ENCODE measurements at regions of chr1 and their contacts with region 1.

Region 1: GRCh38 chr1:182839209-182840065 is at the start of gene DHX9:
- DNase-seq: peak; percentile 93 to 100 (median 97)
- ATAC-seq: peak; percentile 89
- H3K4me3 ChIP-seq: peak within 1 kb of the TSS; percentile 99
- H3K4me3 Mint-ChIP-seq: peak within 1 kb of the TSS; percentile 91 to 100 (median 98)
- H3K27ac ChIP-seq: peak within 1 kb of the TSS; percentile 84
- H3K27ac Mint-ChIP-seq: peak within 1 kb of the TSS; percentile 92 to 100 (median 98)
- H3K4me1 ChIP-seq: peaks cover 22 to 33% of the 10 kb centered on the region in 2 donors
- H3K4me1 Mint-ChIP-seq: peaks cover 36 to 61% (median 54%) of the 10 kb centered on the region in 7 donors
- H3K27me3 ChIP-seq: no peaks in the 10 kb centered on the region
- H3K27me3 Mint-ChIP-seq: peaks cover 0 to 9% (median 0%) of the 10 kb centered on the region in 5 donors
- total RNA-seq, gene DHX9: 207 to 299 (median 227) TPM

Region 2: DNA sequence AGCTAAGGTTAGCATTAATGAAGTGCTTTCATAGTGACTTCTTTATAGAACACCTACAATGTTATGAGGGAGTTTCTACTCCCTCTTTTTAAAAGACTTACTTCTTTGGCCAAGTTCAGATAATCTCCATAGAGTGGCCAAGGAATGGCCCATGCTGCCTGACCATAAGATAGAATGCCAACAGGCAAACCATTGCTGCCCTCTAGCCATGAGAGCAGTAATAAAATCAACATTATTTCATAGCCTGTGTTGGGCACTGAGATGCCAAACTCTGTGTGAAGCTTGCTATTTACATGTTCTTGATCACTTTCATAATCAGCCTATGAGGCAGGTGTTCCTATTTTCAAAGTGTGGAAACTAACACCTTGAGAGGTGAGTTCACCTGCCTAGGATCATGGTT is 910.1 kb before region 1 on chr1:
- CTCF ChIA-PET with region 1: no interaction called
- POLR2A ChIA-PET with region 1: no interaction called
- intact Hi-C with region 1: no loop called
- DNase-seq: no peak
- ATAC-seq: no peak
- H3K4me3 ChIP-seq: no peak overlapping the region
- H3K4me3 Mint-ChIP-seq: no peak overlapping the region
- H3K27ac ChIP-seq: no peak overlapping the region
- H3K27ac Mint-ChIP-seq: no peak overlapping the region
- H3K4me1 ChIP-seq: no peaks in the 10 kb centered on the region
- H3K4me1 Mint-ChIP-seq: no peaks in the 10 kb centered on the region
- H3K27me3 ChIP-seq: no peaks in the 10 kb centered on the region
- H3K27me3 Mint-ChIP-seq: peaks cover 0 to 8% (median 4%) of the 10 kb centered on the region in 5 donors

Region 3: GRCh38 chr1:182259229-182259872 is 580.1 kb before region 1 on chr1:
- CTCF ChIA-PET with region 1: no interaction called
- POLR2A ChIA-PET with region 1: no interaction called
- intact Hi-C with region 1: loop called in 1 of 2 experiments (anchors 1 kb)
- DNase-seq: peak; percentile 21 to 79 (median 65)
- ATAC-seq: peak; percentile 90
- H3K4me3 ChIP-seq: peak overlapping the region; percentile 2
- H3K4me3 Mint-ChIP-seq: peak overlapping the region; percentile 28 to 82 (median 75)
- H3K27ac ChIP-seq: peak overlapping the region; percentile 72
- H3K27ac Mint-ChIP-seq: peak overlapping the region; percentile 83 to 97 (median 91)
- H3K4me1 ChIP-seq: peaks cover 11 to 20% of the 10 kb centered on the region in 2 donors
- H3K4me1 Mint-ChIP-seq: peaks cover 23 to 50% (median 43%) of the 10 kb centered on the region in 7 donors
- H3K27me3 ChIP-seq: no peaks in the 10 kb centered on the region
- H3K27me3 Mint-ChIP-seq: no peaks in the 10 kb centered on the region

Region 4: GRCh38 chr1:182588500-182589452 is 250.7 kb before region 1 on chr1 and contains the start of gene RNASEL:
- CTCF ChIA-PET with region 1: no interaction called
- POLR2A ChIA-PET with region 1: interaction called, 7 read pairs
- intact Hi-C with region 1: loop called (anchors 1 kb)
- DNase-seq: peak; percentile 24 to 72 (median 65)
- ATAC-seq: peak; percentile 89
- H3K4me3 ChIP-seq: peak within 1 kb of the TSS; percentile 92
- H3K4me3 Mint-ChIP-seq: peak within 1 kb of the TSS; percentile 93 to 99 (median 98)
- H3K27ac ChIP-seq: peak within 1 kb of the TSS; percentile 97
- H3K27ac Mint-ChIP-seq: peak within 1 kb of the TSS; percentile 97 to 100 (median 99)
- H3K4me1 ChIP-seq: peaks cover 23 to 27% of the 10 kb centered on the region in 2 donors
- H3K4me1 Mint-ChIP-seq: peaks cover 31 to 60% (median 51%) of the 10 kb centered on the region in 7 donors
- H3K27me3 ChIP-seq: no peaks in the 10 kb centered on the region
- H3K27me3 Mint-ChIP-seq: peaks cover 0 to 9% (median 0%) of the 10 kb centered on the region in 5 donors
- total RNA-seq, gene RNASEL: 5.7 to 34.9 (median 12.1) TPM

Region 5: DNA sequence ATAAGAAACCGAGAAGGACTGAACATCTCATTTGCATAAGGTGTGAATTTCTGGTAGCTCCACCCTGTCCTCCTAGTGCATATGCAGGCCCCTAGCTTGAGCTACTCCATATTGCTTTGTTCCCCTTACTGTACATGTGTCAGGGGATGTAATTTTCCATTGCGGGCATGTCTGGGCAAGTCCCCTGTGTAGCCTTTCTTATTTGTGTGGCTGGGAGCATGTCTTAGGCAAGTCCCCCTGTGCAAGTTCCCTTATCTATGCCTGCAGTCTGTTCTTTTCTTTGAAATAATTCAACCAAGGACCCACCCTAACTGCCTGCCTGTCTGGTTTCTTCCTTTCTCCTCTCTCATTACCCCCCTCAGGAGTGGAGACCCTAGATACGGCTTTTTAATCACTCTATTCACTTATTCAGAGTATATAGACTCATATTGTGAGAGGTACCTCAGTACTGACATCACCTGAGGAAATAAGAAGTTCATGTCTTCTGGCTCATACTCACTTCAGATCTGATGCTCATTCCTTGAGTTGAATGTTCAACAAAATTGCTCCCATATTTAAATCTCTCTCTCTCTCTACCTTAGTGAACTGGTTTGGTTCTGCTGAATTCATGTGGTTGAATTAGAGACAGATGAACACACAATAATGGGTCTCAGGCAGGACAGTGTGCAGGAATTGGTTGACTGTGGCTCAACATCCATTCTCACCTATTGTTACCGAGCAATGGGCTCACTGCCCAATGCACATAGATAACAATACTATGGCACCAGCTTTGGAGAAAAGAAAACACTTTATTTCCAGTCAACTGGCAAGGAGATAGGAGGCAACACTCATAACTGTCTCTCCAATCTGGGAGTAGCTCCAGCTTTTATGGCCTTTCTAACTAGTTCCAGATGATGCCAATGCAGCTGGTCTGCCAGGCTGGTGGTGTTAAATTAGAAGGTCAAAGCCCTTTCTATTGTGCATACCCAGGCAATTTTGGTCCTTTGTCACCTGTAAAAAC is 77.7 kb before region 1 on chr1:
- CTCF ChIA-PET with region 1: no interaction called
- POLR2A ChIA-PET with region 1: no interaction called
- intact Hi-C with region 1: no loop called
- DNase-seq: no peak
- ATAC-seq: no peak
- H3K4me3 ChIP-seq: no peak overlapping the region
- H3K4me3 Mint-ChIP-seq: no peak overlapping the region
- H3K27ac ChIP-seq: no peak overlapping the region
- H3K27ac Mint-ChIP-seq: no peak overlapping the region
- H3K4me1 ChIP-seq: no peaks in the 10 kb centered on the region
- H3K4me1 Mint-ChIP-seq: peaks cover 0 to 5% (median 0%) of the 10 kb centered on the region in 7 donors
- H3K27me3 ChIP-seq: no peaks in the 10 kb centered on the region
- H3K27me3 Mint-ChIP-seq: peaks cover 6 to 19% (median 9%) of the 10 kb centered on the region in 5 donors

Region 6: GRCh38 chr1:182817802-182818201 is 21.6 kb before region 1 on chr1:
- CTCF ChIA-PET with region 1: no interaction called
- POLR2A ChIA-PET with region 1: no interaction called
- intact Hi-C with region 1: no loop called
- DNase-seq: no peak
- ATAC-seq: no peak
- H3K4me3 ChIP-seq: no peak overlapping the region
- H3K4me3 Mint-ChIP-seq: no peak overlapping the region
- H3K27ac ChIP-seq: no peak overlapping the region
- H3K27ac Mint-ChIP-seq: no peak overlapping the region
- H3K4me1 ChIP-seq: no peaks in the 10 kb centered on the region
- H3K4me1 Mint-ChIP-seq: no peaks in the 10 kb centered on the region
- H3K27me3 ChIP-seq: no peaks in the 10 kb centered on the region
- H3K27me3 Mint-ChIP-seq: no peaks in the 10 kb centered on the region

Region 7: DNA sequence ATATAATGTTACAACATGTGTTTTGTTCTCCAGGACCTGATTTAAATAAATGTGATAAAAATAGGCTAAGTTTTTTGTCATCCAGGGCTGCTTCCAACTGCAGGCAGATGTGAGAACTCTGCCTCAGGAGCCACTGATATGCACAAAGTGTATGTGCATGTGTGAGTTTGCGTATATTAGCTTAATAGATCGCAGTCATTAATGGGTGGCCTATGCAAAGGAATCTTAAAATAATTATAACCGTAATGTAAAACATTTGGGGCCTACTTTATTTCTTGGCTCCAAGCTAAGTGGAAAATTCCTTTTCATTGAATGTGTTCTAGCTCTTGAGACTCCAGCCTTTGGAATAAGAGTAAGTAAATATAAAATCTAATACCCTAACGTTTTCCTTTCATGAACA is 16.5 kb after region 1 on chr1:
- CTCF ChIA-PET with region 1: no interaction called
- POLR2A ChIA-PET with region 1: interaction called, 3 read pairs
- intact Hi-C with region 1: loop called in 1 of 2 experiments (anchors 2 kb)
- DNase-seq: no peak
- ATAC-seq: no peak
- H3K4me3 ChIP-seq: no peak overlapping the region
- H3K4me3 Mint-ChIP-seq: no peak overlapping the region
- H3K27ac ChIP-seq: no peak overlapping the region
- H3K27ac Mint-ChIP-seq: no peak overlapping the region
- H3K4me1 ChIP-seq: no peaks in the 10 kb centered on the region
- H3K4me1 Mint-ChIP-seq: peaks cover 0 to 21% (median 13%) of the 10 kb centered on the region in 7 donors
- H3K27me3 ChIP-seq: no peaks in the 10 kb centered on the region
- H3K27me3 Mint-ChIP-seq: no peaks in the 10 kb centered on the region

Region 8: GRCh38 chr1:184051485-184052193 is 1212.2 kb after region 1 on chr1 and contains the start of gene TSEN15:
- CTCF ChIA-PET with region 1: no interaction called
- POLR2A ChIA-PET with region 1: no interaction called
- intact Hi-C with region 1: loop called (anchors 1 to 2 kb)
- DNase-seq: peak; percentile 54 to 75 (median 68)
- ATAC-seq: peak; percentile 98
- H3K4me3 ChIP-seq: peak within 1 kb of the TSS; percentile 87
- H3K4me3 Mint-ChIP-seq: peak within 1 kb of the TSS; percentile 91 to 99 (median 98)
- H3K27ac ChIP-seq: peak within 1 kb of the TSS; percentile 77
- H3K27ac Mint-ChIP-seq: peak within 1 kb of the TSS; percentile 89 to 99 (median 95)
- H3K4me1 ChIP-seq: peaks cover 19 to 23% of the 10 kb centered on the region in 2 donors
- H3K4me1 Mint-ChIP-seq: peaks cover 18 to 56% (median 45%) of the 10 kb centered on the region in 7 donors
- H3K27me3 ChIP-seq: peaks cover 0 to 3% of the 10 kb centered on the region in 2 donors
- H3K27me3 Mint-ChIP-seq: peaks cover 13 to 33% (median 20%) of the 10 kb centered on the region in 5 donors
- total RNA-seq, gene TSEN15: 12.7 to 48.9 (median 31.1) TPM

Measured in naive thymus-derived CD4-positive, alpha-beta T cell (primary cell).